Gastrocnemius medialis (tissue), 4 donors: ENCODE measurements at regions of chr18 and their contacts with region 1.

Region 1: DNA sequence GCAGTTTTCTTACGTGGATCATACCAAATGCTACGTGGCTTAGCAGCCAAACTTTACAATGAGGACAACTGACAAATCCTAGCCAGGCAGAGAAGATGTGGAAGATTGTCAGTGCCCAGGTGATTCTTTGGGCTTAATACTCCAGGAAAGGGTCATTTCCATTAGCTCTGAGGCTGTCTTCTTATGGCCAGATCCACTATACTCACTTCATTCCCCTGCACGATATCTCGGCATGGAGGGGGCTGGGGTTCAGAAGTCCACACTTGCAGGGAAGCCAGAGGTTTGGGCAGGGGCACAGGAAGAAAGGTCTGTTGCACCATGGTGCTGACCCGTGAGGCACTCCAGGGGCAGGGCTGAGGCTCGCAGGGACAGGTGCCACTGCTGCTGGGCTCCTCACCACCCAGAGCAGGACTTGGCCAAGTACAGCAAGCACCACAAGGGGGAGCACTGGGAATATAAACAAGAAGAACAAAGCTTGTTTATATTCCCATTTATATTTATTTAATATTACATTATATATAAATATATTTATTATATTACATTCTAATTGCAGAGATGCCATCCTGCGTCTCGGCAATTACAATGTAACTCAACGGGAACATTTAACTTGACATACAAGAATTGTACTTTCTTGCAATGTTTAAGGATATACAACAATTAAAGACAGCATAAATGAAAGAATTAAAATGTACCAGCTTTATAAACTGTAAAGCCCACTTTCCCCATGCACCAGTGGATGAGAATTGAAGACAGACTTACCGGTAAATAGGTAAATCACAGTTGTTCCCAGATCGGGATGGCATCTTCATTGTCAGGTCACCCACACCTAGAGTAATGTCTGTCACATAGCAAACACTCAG is 27.2 kb downstream of the CLUL1 start:
- DNase-seq: peak; percentile 7 to 18
- ATAC-seq: no peak
- H3K4me3 ChIP-seq: no peak overlapping the region
- H3K27ac ChIP-seq: no peak overlapping the region
- H3K4me1 ChIP-seq: no peaks in the 10 kb centered on the region
- H3K27me3 ChIP-seq: no peaks in the 10 kb centered on the region
- CTCF ChIP-seq: peak in 4 of 5 experiments; percentile 24 to 58 (median 40)
- POLR2A ChIP-seq: no peak

Region 2: DNA sequence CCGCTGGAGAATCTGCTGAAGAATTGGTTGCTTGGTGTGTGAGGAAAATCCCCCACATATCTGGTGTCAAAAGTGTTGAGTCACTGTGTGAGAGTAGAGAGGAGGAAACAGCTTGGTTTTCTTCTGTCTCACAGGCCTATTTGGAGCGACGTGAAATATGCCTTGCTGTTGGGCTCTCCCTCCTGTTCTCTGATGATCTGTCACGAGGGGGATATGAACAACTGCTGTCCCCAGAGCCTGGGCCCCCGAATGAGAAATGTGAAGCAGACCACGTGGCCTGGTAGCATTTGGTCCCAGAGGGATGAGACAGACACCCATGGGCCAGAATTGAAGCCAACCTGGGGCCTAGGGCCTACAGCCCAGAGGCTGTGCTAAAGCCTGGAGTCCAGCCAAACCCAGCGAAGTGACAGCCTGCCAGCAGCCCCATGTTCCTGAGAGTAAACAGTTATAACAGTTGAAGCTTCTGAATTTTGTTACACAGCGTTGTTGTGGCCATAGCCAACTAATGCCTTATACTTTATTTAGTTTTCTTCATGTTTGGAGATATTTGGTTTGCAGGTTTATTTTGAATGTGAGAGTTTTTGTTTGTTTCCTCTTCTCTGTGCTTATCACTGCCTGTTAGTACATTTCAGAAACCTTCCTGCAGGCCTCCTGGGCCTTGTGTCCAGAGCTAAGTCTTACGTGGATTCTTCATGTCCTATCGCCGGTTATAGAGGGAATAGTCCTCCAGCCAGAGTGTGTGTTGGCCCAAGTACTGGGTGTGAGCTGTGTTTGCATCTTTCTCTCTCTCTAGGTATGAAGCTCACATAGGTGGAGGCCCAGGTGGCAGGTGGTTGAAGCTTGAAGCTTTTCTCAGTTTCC is 104.7 kb before region 1 on chr18:
- in situ Hi-C with region 1: loop called in 2 of 4 experiments (anchors 25 kb)
- intact Hi-C with region 1: no loop called
- DNase-seq: no peak
- ATAC-seq: peak in 1 of 2 donors; percentile 39
- H3K4me3 ChIP-seq: no peak overlapping the region
- H3K27ac ChIP-seq: peak overlapping the region in 2 of 4 donors; percentile 38
- H3K4me1 ChIP-seq: no peaks in the 10 kb centered on the region
- H3K27me3 ChIP-seq: no peaks in the 10 kb centered on the region
- CTCF ChIP-seq: no peak
- POLR2A ChIP-seq: no peak

Region 3: DNA sequence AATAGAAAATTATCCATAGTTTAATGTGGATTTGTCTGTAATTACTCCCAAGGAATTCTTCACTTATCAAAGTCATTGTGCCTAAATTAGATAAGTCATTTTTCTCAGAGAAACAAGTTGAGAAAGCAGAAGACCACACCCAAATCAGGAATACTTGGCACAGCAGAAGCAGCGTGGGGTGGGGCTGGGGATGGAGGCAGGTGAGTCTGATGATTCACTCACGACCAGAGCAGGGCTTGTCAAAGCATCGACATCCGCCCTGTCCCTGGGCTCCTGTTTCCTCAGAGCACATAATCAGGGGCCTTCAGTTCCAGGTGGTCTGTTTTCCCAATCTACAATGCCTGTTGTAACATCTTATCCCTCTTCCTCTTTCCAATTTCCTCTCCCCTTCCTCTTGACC is 92.0 kb before region 1 on chr18:
- in situ Hi-C with region 1: no loop called
- intact Hi-C with region 1: no loop called
- DNase-seq: no peak
- ATAC-seq: no peak
- H3K4me3 ChIP-seq: no peak overlapping the region
- H3K27ac ChIP-seq: no peak overlapping the region
- H3K4me1 ChIP-seq: no peaks in the 10 kb centered on the region
- H3K27me3 ChIP-seq: no peaks in the 10 kb centered on the region
- CTCF ChIP-seq: no peak
- POLR2A ChIP-seq: no peak